ENCODE measurements at regions of chr15 and their contacts with region 1.

Region 1: GRCh38 chr15:68192804-68193486 is 12.2 kb downstream of the CALML4 start:
- DNase-seq: no peak
- H3K4me3 ChIP-seq: no peak overlapping the region
- H3K27ac ChIP-seq: no peak overlapping the region
- H3K4me1 ChIP-seq: no peaks in the 10 kb centered on the region
- H3K27me3 ChIP-seq: no peaks in the 10 kb centered on the region
- CTCF ChIP-seq: no peak

Region 2: GRCh38 chr15:67915461-67916374 is 277.2 kb before region 1 on chr15:
- CTCF ChIA-PET with region 1: no interaction called
- POLR2A ChIA-PET with region 1: interaction called, 13 read pairs
- intact Hi-C with region 1: no loop called
- DNase-seq: no peak
- H3K4me3 ChIP-seq: no peak overlapping the region
- H3K27ac ChIP-seq: no peak overlapping the region
- H3K4me1 ChIP-seq: 0 out of 2 replicates have a peak, but pooled peaks cover 11% of the 10 kb centered on the region
- H3K27me3 ChIP-seq: no peaks in the 10 kb centered on the region
- CTCF ChIP-seq: no peak

Region 3: GRCh38 chr15:68137096-68137495 is 55.8 kb before region 1 on chr15:
- CTCF ChIA-PET with region 1: no interaction called
- POLR2A ChIA-PET with region 1: interaction called, 14 read pairs
- intact Hi-C with region 1: no loop called
- DNase-seq: no peak
- H3K4me3 ChIP-seq: no peak overlapping the region
- H3K27ac ChIP-seq: no peak overlapping the region
- H3K4me1 ChIP-seq: peaks cover 13% of the 10 kb centered on the region
- H3K27me3 ChIP-seq: no peaks in the 10 kb centered on the region
- CTCF ChIP-seq: no peak

Measured in PC-9 (cell line).